Posterior vena cava (tissue), 2 donors: ENCODE measurements at regions of chrX and their contacts with region 1.

Region 1: DNA sequence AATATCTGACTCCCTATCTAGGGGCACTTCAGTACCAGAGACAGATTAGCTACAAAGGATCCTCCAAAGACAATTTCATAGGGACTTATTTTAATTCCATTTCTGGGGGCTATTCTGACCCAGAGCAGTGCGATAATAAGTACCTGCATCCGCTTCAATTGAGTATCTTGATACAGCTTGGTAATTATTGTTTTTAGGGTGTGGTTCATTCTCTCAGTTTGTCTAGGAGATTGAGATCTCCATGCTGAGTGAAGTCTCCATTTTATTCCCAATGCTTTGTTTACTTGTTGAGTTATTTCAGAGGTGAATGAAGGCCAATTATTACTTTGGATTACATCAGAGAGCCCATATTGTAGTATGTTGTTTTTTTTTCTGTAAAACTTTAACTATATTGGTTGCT is 337.6 kb downstream of the FAM133A start:
- DNase-seq: no peak

Region 2: DNA sequence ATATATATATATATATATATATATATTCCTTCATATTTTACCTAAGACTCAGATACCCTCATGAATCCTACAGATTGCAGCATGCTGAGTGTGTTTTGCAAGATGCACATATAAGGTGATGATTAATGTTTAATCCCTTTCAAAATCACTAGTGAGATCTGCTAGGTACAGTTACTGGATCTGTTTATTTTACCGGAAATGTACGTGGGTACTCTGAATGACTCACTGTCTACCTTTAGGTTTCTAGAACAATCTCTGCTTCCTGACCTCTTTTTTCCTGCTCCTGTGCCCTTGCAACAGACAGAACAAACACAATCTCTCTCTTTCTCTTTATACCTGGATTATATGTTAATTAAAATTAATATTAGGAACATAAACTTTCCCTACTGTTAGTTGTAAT is 41.9 kb after region 1 on chrX:
- intact Hi-C with region 1: loop called in 1 of 2 experiments (anchors 2 kb)
- DNase-seq: no peak